Gastrocnemius medialis (tissue), 4 donors: ENCODE measurements at regions of chr6 and their contacts with region 1.

Region 1: DNA sequence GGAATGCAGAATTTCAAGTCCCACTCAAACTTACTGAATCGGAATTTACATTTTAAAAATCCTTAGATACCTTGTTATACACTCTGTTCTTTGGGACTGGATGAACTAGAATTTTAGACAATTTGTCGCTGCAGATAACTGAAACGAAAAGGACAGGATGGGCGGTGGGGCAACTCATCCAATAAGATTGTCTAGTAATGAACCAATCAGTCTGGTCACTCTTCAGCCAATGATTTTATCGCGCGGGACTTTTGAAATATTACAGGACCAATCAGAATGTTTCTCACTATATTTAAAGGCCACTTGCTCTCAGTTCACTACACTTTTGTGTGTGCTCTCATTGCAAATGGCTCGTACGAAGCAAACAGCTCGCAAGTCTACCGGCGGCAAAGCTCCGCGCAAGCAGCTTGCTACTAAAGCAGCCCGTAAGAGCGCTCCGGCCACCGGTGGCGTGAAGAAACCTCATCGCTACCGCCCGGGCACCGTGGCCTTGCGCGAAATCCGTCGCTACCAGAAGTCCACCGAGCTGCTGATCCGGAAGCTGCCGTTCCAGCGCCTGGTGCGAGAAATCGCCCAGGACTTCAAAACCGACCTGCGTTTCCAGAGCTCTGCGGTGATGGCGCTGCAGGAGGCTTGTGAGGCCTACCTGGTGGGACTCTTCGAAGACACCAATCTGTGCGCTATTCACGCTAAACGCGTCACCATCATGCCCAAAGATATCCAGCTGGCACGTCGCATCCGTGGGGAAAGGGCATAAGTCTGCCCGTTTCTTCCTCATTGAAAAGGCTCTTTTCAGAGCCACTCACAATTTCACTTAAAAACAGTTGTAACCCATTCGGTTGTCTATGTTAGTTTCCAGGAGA is 41.9 kb upstream of the HFE start:
- DNase-seq: peak; percentile 72 to 84
- ATAC-seq: peak; percentile 69 to 71
- H3K4me3 ChIP-seq: peak overlapping the region; percentile 54 to 68 (median 62)
- H3K27ac ChIP-seq: peak overlapping the region; percentile 86 to 92 (median 88)
- H3K4me1 ChIP-seq: peaks cover 11 to 13% of the 10 kb centered on the region in 2 donors
- H3K27me3 ChIP-seq: peaks cover 0 to 36% (median 0%) of the 10 kb centered on the region in 3 donors
- CTCF ChIP-seq: no peak
- POLR2A ChIP-seq: peak; percentile 40 to 71

Region 2: DNA sequence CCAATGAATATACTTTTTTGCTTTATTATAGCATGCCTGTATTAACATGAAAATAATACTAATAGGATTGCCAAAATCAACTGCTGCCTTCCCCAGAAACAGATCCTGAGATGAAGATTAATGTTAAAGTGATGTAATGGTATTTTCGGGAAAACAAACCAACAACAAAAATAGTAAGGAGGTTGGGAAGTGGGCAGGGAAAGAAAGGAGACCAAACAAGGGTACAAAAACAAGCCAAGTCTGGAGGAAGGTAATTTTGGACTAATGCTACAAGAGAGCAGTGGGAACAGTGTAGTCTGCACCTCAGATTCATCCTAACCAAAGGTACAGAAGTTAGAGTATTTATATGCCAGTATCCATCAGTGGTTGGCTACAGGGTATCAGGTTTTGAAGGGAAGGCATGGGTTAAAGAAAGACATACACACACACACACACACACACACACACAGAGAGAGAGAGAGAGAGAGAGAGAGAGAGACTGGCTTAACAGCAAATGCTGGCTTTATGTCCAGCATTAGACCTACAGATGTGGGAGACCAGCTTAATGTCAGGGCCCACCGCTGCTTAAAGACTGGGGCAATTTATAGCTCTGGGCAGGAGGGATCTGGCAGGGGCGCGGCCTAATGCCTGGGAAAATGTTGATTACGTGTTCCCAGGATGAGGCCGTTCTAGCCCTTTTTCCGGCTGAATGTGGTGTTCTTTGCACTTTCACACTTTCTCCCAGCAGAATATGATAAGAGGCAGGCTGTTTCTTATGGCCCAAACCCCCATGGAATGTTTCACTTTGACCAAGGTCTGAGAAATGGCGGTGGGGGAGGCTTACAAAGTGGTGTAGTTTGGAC is 209.6 kb before region 1 on chr6:
- in situ Hi-C with region 1: no loop called
- intact Hi-C with region 1: no loop called
- DNase-seq: no peak
- ATAC-seq: no peak
- H3K4me3 ChIP-seq: no peak overlapping the region
- H3K27ac ChIP-seq: no peak overlapping the region
- H3K4me1 ChIP-seq: no peaks in the 10 kb centered on the region
- H3K27me3 ChIP-seq: no peaks in the 10 kb centered on the region
- CTCF ChIP-seq: no peak
- POLR2A ChIP-seq: no peak

Region 3: DNA sequence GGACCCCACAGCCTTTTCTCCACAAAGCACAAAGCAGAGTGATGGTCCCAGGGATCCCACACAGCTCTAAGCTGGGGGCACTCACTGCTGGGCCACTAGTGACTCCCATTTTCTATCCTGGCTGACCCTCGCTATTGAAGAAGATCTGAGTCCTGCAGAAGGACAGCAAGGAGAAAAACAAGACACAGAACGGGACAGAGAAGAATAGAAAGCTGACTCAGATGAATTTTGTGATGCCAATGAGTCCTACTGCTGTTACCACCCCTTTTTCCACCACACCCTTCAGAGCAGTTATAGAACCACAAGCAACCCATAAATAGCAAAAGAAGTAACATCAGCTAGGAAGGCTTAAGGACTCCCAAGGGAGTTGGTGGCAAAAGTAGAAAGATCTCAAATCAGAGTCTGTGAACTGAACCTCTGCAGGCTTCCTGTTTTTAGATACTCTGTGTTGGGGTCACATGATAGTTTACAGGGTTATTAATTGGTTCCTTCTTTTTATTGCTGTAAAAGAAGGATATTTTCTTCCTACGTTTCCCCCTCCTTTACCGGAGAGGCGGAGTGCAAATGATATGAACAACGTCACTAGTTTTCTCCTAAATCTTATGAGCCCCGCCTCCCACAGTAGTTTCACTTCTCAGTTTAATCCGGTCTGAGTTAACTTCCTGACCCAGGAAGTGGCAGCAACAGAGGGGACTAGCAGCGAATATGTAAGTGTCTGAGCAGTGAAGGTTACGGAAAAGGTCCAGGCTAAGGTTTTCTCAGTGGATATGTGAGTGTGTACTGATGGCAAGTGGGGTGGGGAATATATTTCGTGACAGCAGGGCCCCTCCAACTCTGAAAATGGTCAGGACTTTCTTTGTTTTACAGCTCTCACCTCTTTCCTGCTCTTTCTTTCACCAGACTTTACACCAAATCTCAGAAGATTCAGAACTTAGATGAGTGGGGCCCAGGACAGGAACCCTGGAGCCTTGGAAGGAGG is 82.9 kb before region 1 on chr6 and contains the start of gene TRIM38:
- in situ Hi-C with region 1: no loop called
- intact Hi-C with region 1: no loop called
- DNase-seq: peak; percentile 66 to 68
- ATAC-seq: peak; percentile 88 to 89
- H3K4me3 ChIP-seq: peak within 1 kb of the TSS; percentile 52 to 65 (median 64)
- H3K27ac ChIP-seq: peak within 1 kb of the TSS; percentile 82 to 90 (median 86)
- H3K4me1 ChIP-seq: peaks cover 39 to 43% of the 10 kb centered on the region in 2 donors
- H3K27me3 ChIP-seq: no peaks in the 10 kb centered on the region
- CTCF ChIP-seq: no peak
- POLR2A ChIP-seq: peak; percentile 81 to 85
- total RNA-seq, gene TRIM38: 2.2 to 6.7 (median 4.6) TPM

Region 4: GRCh38 chr6:26025894-26026832 is 19.1 kb before region 1 on chr6:
- in situ Hi-C with region 1: no loop called
- intact Hi-C with region 1: loop called (anchors 2 kb)
- DNase-seq: peak; percentile 86 to 87
- ATAC-seq: peak; percentile 60 to 72
- H3K4me3 ChIP-seq: peak overlapping the region; percentile 46 to 65 (median 62)
- H3K27ac ChIP-seq: peak overlapping the region; percentile 80 to 88 (median 83)
- H3K4me1 ChIP-seq: peaks cover 0 to 15% of the 10 kb centered on the region in 2 donors
- H3K27me3 ChIP-seq: peaks cover 7 to 67% (median 13%) of the 10 kb centered on the region in 3 donors
- CTCF ChIP-seq: peak; percentile 50 to 75 (median 73)
- POLR2A ChIP-seq: peak; percentile 7